ENCODE measurements at regions of chr12 and their contacts with region 1.

Region 1: DNA sequence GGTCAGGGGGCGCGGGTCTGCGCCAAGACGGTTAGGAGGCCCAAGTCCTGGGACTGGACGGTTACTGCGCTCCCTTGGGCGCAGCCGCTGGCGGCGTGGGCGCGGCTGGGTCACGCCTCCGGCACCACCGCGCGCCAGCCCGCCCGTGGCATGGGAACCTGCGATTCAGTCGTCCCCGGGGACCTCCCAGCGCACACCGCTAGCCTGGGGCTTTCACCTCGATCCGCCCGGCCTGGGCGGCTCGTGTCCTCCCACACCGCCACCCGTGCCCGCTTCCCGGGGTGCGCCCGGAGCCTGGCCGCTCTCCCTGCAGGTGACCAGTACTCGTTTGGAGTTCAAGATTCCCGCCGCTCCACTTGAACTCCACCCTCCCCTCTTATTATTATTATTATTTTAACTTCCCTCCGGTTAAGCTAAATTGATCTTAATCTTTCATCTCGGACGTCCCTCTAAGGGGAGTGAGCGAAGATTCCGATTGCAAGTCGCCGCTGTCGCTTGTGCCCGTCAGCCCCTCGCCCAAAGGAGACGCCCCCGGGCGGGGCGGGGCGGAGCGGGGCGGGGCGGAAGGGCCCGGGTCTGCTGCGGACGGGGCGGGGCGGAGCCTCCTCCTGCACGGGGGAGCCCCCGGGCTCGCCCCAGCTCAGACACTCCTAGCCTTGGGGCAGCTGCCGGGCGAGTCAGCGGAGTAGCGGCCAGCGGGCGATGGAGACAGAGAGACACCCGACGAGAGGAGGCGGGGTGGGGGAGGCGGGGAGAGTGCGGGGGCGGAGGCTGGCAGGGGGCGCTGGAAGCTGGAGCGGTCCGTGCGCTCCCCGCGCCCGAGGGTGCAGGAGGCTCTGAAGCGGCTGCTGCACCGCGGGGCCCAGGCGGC is at the start of gene KCNMB4:
- DNase-seq: peak; percentile 79
- ATAC-seq: peak; percentile 90
- H3K4me3 Mint-ChIP-seq: peak within 1 kb of the TSS; percentile 91
- H3K27ac Mint-ChIP-seq: no peak within 1 kb of the TSS
- H3K4me1 Mint-ChIP-seq: peaks cover 20% of the 10 kb centered on the region
- H3K27me3 Mint-ChIP-seq: no peaks in the 10 kb centered on the region
- CTCF ChIP-seq: no peak
- total RNA-seq, gene KCNMB4: 0.71 and 0.86 TPM in 2 replicates

Region 2: DNA sequence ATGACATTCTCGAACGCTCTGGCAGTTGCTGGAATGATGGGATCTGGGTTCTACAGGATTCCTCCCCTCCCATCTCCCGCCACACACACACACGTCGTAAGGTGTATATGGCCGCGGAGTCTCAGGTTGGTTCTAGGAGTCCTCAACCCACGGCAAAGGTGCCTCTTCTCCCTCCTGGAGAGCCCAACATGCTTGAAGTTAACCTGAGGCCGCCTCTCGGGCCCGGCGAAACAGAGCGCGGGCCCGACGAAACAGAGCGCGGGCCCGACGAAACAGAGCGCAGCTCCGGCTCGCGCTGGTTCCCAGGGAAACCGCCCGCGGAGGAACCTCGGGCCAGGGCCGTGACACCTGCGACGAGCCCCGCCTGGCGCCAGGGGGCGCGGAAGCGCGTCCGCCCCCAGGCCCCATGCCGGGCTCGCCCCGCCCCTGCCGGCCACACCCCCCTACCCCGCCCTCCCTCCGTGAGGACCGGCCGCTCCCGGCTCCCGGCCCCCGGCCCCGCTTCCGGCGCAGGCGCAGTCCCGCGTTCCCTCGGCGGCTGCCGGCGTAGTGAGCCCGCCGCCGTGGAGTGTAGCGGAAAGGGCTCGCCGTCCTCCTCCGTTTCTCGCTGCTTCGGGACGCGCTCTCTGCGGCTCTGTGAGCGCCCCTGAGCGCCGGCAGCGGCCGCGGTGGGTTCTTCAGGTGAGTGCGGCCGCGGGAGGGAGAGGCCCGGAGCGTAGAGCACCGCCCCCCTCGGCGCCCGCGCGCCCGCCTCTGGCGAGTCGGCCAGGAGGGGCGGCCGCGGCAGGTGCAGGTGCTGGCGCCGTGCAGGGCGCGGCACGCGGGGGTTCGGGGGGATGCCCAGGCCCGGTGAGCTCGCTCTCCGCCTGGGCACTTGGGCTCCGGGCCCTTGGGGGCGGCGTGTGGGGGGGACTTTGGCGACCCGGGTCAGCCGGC is 627.3 kb before region 1 on chr12 and contains the start of gene RAB3IP:
- CTCF ChIA-PET with region 1: no interaction called
- POLR2A ChIA-PET with region 1: no interaction called
- intact Hi-C with region 1: loop called (anchors 2 kb)
- DNase-seq: peak; percentile 93
- ATAC-seq: peak; percentile 90
- H3K4me3 Mint-ChIP-seq: peak within 1 kb of the TSS; percentile 85
- H3K27ac Mint-ChIP-seq: peak within 1 kb of the TSS; percentile 73
- H3K4me1 Mint-ChIP-seq: peaks cover 19% of the 10 kb centered on the region
- H3K27me3 Mint-ChIP-seq: peaks cover 4% of the 10 kb centered on the region
- CTCF ChIP-seq: no peak
- total RNA-seq, gene RAB3IP: 34.6 and 37.9 TPM in 2 replicates

Region 3: GRCh38 chr12:70178038-70178437 is 187.8 kb before region 1 on chr12:
- CTCF ChIA-PET with region 1: no interaction called
- POLR2A ChIA-PET with region 1: no interaction called
- intact Hi-C with region 1: no loop called
- DNase-seq: no peak
- ATAC-seq: no peak
- H3K4me3 Mint-ChIP-seq: no peak overlapping the region
- H3K27ac Mint-ChIP-seq: no peak overlapping the region
- H3K4me1 Mint-ChIP-seq: no peaks in the 10 kb centered on the region
- H3K27me3 Mint-ChIP-seq: no peaks in the 10 kb centered on the region
- CTCF ChIP-seq: no peak

Region 4: GRCh38 chr12:70255311-70255710 is 110.6 kb before region 1 on chr12:
- CTCF ChIA-PET with region 1: no interaction called
- POLR2A ChIA-PET with region 1: no interaction called
- intact Hi-C with region 1: loop called (anchors 5 kb)
- DNase-seq: no peak
- ATAC-seq: no peak
- H3K4me3 Mint-ChIP-seq: no peak overlapping the region
- H3K27ac Mint-ChIP-seq: no peak overlapping the region
- H3K4me1 Mint-ChIP-seq: peaks cover 59% of the 10 kb centered on the region
- H3K27me3 Mint-ChIP-seq: no peaks in the 10 kb centered on the region
- CTCF ChIP-seq: no peak

Region 5: DNA sequence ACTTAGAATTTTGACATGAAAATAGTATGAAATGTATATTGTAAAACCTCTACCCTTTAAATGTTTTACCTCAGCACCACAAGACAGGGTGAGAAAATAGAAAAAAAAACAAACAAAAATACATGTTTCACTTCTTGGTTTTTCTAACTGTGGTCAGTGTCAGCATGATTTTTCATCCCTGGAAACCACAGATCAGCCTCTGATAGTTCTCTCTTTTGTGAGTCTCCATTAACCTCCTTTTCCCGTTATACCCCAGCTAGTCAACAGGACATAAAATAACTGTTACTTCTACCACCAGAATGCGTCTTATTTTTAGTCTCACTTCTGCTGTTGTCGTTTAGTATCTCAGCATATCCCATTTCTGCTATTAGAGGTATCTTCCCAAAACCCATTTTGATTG is 48.1 kb before region 1 on chr12:
- CTCF ChIA-PET with region 1: no interaction called
- POLR2A ChIA-PET with region 1: no interaction called
- intact Hi-C with region 1: loop called (anchors 2 kb)
- DNase-seq: no peak
- ATAC-seq: peak; percentile 21
- H3K4me3 Mint-ChIP-seq: no peak overlapping the region
- H3K27ac Mint-ChIP-seq: no peak overlapping the region
- H3K4me1 Mint-ChIP-seq: peaks cover 33% of the 10 kb centered on the region
- H3K27me3 Mint-ChIP-seq: no peaks in the 10 kb centered on the region
- CTCF ChIP-seq: no peak

Region 6: DNA sequence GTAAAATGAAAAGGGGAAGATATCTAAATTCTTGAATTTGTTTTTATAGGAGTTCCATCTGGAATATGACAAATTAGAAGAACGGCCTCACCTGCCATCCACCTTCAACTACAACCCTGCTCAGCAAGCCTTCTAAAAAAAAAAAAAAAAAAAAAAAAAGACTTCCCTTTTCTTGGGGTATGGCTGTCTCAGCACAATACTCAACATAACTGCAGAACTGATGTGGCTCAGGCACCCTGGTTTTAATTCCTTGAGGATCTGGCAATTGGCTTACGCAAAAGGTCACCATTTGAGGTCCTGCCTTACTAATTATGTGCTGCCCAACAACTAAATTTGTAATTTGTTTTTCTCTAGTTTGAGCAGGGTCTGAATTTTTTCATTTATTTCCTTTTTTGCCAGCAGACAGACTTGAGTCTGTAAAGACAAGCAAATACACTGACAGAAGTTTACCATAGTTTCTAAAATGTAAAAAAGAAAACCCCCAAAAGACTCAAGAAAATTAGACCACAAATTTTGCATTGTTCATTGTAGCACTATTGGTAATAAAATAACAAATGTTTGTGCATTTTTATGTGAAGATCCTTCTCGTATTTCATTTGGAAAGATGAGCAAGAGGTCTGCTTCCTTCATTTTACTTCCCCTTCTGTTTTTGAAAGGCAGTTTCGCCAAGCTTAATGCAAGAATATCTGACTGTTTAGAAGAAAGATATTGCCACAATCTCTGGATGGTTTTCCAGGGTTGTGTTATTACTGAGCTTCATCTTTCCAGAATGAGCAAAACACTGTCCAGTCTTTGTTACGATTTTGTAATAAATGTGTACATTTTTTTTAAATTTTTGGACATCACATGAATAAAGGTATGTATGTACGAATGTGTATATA is 11.9 kb before region 1 on chr12:
- CTCF ChIA-PET with region 1: no interaction called
- POLR2A ChIA-PET with region 1: interaction called, 3 read pairs
- intact Hi-C with region 1: loop called (anchors 1 kb)
- DNase-seq: no peak
- ATAC-seq: no peak
- H3K4me3 Mint-ChIP-seq: no peak overlapping the region
- H3K27ac Mint-ChIP-seq: peak overlapping the region; percentile 41
- H3K4me1 Mint-ChIP-seq: peaks cover 9% of the 10 kb centered on the region
- H3K27me3 Mint-ChIP-seq: no peaks in the 10 kb centered on the region
- CTCF ChIP-seq: no peak

Region 7: GRCh38 chr12:70487440-70487839 is 121.6 kb after region 1 on chr12:
- CTCF ChIA-PET with region 1: interaction called, 3 read pairs
- POLR2A ChIA-PET with region 1: no interaction called
- intact Hi-C with region 1: loop called (anchors 10 kb)
- DNase-seq: no peak
- ATAC-seq: peak; percentile 40
- H3K4me3 Mint-ChIP-seq: no peak overlapping the region
- H3K27ac Mint-ChIP-seq: peak overlapping the region; percentile 38
- H3K4me1 Mint-ChIP-seq: peaks cover 38% of the 10 kb centered on the region
- H3K27me3 Mint-ChIP-seq: no peaks in the 10 kb centered on the region
- CTCF ChIP-seq: no peak